AG04449 (cell line): ENCODE measurements at regions of chr21 and their contacts with region 1.

Region 1: DNA sequence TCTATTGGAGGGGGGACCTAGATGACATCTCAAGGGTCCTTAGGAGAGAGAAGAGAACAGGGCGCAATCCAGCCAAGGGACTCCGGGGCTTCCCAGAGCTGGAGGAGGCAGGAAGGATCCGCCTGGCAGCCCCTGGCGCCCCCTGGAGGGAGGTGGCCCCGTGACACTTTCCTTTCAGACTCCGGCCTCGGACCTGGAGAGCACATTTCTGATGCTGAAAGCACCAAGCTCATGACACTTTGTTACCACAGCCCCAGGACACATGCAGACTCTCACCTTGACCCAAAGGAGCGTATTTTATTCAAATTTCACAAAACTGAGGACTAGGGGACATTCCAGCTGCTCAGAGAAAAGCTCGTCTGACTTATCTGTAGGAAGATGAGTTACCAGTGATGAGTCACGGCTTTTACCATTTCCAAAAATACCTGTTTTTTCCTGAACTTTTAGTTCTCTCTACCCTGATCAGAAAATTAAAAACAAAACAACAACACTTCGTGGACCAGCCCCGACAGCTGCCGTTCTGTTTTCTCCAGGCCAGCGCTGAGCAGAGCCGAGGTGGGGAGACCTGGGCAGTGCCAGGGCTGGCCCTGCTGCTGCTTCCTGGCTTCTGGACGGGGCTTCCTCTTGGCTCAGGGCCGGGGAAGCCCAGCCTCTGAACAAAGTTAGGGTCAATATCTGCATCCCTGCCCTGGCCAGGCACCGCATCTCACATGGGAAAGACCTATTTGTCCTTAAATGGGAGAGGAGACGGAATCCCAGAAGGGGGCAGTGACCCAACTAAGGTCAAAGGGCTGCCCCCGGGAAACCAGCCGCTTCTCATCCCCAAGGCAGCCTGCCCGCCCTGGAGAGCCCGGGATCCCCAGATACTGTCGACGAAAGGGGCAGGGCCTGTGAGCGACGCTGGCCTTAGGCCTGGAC is 21.6 kb upstream of the POFUT2 start:
- DNase-seq: no peak
- H3K4me3 ChIP-seq: no peak overlapping the region
- CTCF ChIP-seq: peak; percentile 89

Region 2: DNA sequence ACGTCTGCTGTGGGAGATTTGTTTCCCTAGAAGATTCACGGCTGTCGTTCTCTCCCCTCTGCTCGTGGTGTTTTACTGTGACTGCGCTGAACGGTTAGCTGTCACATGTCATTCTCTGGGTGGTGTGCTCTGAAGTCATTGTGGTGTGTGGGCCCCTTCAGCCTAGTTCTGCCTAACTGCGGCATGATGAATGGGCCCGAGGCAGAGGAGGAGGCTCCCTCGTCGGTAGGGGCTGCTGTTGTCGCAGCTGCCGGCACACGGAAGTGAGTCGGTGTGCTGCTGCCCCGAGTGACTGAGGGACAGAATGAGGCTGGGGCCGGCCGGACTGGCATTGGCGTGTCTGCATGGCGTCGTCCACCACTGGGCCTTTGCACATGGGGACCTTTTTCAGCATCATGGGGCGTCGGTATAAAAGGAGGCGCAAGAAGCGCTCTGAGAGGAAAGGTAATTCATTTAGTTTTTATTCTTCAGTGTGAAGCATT is 157.0 kb before region 1 on chr21:
- CTCF ChIA-PET with region 1: no interaction called
- POLR2A ChIA-PET with region 1: no interaction called
- DNase-seq: no peak
- H3K4me3 ChIP-seq: no peak overlapping the region
- CTCF ChIP-seq: peak; percentile 73

Region 3: GRCh38 chr21:45319461-45320211 is 10.3 kb after region 1 on chr21:
- CTCF ChIA-PET with region 1: interaction called, 25 read pairs
- POLR2A ChIA-PET with region 1: no interaction called
- DNase-seq: no peak
- H3K4me3 ChIP-seq: no peak overlapping the region
- CTCF ChIP-seq: no peak

Region 4: GRCh38 chr21:45439161-45439872 is 130.0 kb after region 1 on chr21:
- CTCF ChIA-PET with region 1: interaction called, 12 read pairs
- POLR2A ChIA-PET with region 1: no interaction called
- DNase-seq: peak; percentile 31
- H3K4me3 ChIP-seq: peak overlapping the region; percentile 21; the same call in 1 of the 2 replicates
- CTCF ChIP-seq: peak; percentile 94